ENCODE measurements at regions of chr12 and their contacts with region 1.

Region 1: DNA sequence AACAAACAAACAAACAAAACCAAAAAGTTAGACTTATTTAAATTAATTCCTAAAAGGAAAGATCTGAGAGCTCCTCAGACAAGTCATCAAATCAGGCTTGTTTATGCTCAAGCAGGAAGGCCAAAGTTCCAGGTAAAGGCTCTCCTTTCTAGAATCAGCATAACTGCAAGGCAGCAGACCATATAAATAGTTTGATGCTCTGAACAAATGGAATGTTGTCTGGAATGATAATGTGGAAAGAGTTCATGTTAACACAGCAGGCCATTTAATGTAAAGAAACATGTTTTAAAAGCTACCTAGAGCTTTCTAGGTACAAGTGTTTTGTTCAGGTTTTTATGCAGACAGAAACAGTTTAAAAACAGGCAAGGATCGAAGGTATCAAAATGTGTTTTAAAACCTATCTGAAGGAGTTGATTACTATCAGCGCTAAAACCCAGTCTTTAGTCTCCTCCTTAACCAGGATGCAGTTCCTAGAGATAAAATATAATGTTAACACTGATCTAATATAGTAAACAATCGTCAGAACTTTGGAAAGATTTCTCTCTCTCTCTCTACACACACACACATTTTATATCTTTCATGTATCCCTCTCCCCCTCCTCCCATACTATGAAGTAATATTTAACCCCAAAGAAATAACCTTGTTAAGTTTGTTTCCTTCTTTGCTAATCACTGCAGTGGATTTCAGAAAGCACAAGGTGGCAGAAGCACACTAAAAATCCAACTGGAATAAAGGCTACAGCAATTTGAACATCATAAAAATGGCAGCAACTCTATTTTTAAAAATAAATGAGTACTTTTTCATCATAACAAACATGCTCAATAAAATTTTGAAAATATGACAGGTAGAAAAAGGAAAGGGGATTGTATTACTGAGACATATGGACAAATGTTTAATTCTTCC is 135.5 kb downstream of the PAWR start:
- DNase-seq: no peak
- ATAC-seq: no peak
- H3K4me3 ChIP-seq: no peak overlapping the region
- H3K27ac ChIP-seq: no peak overlapping the region
- H3K4me1 ChIP-seq: peaks cover 2 to 7% of the 10 kb centered on the region in 2 donors
- H3K27me3 ChIP-seq: no peaks in the 10 kb centered on the region

Region 2: GRCh38 chr12:79690638-79691493 is 135.6 kb after region 1 on chr12 and contains the start of gene PAWR:
- intact Hi-C with region 1: loop called (anchors 2 to 5 kb)
- DNase-seq: peak; percentile 73 to 90
- ATAC-seq: peak; percentile 88
- H3K4me3 ChIP-seq: peak within 1 kb of the TSS; percentile 96 to 99
- H3K27ac ChIP-seq: peak within 1 kb of the TSS; percentile 71 to 96
- H3K4me1 ChIP-seq: peaks cover 0 to 4% of the 10 kb centered on the region in 2 donors
- H3K27me3 ChIP-seq: no peaks in the 10 kb centered on the region
- total RNA-seq, gene PAWR: 110 to 150 TPM

Region 3: DNA sequence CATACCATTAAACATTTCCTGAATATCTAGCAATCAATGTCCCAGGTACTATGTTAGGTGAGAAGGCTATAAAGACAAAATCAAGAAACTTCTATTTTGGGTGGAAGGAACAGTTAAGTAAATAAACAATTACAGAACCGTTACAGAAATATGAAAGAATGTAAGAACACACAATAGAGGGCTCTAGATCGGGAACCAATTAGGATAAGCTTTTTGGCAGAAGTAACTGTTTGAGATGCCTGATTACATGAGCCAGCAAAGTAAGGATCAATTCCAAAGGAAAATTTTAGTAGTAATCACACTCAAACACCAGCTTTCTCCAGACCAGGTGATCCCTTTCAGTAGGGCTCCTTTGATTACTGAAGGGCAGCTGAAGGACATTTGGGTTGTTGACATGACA is 345.7 kb after region 1 on chr12:
- intact Hi-C with region 1: loop called in 1 of 2 experiments (anchors 10 kb)
- DNase-seq: no peak
- ATAC-seq: no peak
- H3K4me3 ChIP-seq: no peak overlapping the region
- H3K27ac ChIP-seq: no peak overlapping the region
- H3K4me1 ChIP-seq: peaks cover 6 to 17% of the 10 kb centered on the region in 2 donors
- H3K27me3 ChIP-seq: no peaks in the 10 kb centered on the region

Region 4: DNA sequence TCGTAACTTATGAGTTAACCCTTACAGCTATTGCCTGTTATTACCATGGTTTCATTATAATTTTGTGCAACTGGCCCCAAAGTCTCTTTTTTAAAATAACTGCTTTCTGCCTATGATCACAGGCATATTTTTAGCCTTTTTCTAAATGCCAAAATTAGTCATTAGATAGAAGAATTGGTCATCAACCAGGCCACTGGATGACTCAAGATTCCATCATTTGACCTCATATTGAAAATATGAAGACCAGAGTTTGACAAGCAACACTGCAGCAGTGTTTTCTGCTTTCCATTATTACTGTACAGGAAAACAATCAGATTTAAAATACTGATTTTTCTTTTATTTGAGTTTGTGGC is 489.4 kb after region 1 on chr12:
- intact Hi-C with region 1: loop called in 1 of 2 experiments (anchors 10 kb)
- DNase-seq: no peak
- ATAC-seq: no peak
- H3K4me3 ChIP-seq: no peak overlapping the region
- H3K27ac ChIP-seq: no peak overlapping the region
- H3K4me1 ChIP-seq: peaks cover 2 to 3% of the 10 kb centered on the region in 2 donors
- H3K27me3 ChIP-seq: no peaks in the 10 kb centered on the region

Region 5: DNA sequence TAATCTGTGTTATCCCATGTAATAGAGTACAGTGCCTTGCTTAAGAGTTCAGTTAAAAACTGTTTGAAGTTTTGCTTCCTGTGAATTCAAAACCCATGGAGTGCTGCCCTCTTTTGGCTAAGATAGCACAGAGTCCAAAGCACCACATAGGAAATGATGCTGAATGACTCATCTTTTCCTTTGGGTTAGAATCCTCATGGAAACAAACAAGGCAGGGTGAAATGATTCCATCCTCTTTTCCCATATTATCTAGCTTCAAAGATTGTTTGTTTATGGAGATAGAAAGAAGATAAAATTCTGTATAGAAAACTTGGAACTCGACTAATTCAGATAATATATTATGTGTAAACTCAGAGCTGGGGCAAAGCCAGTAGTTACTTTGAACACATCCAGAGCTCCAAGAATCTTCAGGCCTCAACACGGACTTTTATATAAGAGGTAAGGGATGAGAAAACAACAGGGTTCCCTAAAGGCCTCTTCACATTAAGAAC is 631.5 kb after region 1 on chr12:
- intact Hi-C with region 1: loop called (anchors 5 kb)
- DNase-seq: no peak
- ATAC-seq: peak; percentile 92
- H3K4me3 ChIP-seq: peak overlapping the region in 1 of 2 donors; percentile 45
- H3K27ac ChIP-seq: peak overlapping the region; percentile 80 to 84
- H3K4me1 ChIP-seq: peaks cover 0 to 3% of the 10 kb centered on the region in 2 donors
- H3K27me3 ChIP-seq: no peaks in the 10 kb centered on the region